Common myeloid progenitor, CD34-positive (primary cell): ENCODE measurements at regions of chr5 and their contacts with region 1.

Region 1: GRCh38 chr5:142881076-142881783 is 111.1 kb downstream of the ARHGAP26 start:
- DNase-seq: peak; percentile 63 to 93 (median 93)
- H3K4me3 ChIP-seq: no peak overlapping the region
- H3K27ac ChIP-seq: peak overlapping the region in 1 of 2 experiments; percentile 45
- H3K4me1 ChIP-seq: peaks cover 4 to 12% (median 8%) of the 10 kb centered on the region in 4 experiments
- H3K27me3 ChIP-seq: no peaks in the 10 kb centered on the region

Region 2: GRCh38 chr5:142655339-142656267 is 225.6 kb before region 1 on chr5:
- CTCF ChIA-PET with region 1: interaction called, 10 read pairs
- POLR2A ChIA-PET with region 1: no interaction called
- DNase-seq: peak; percentile 51 to 67 (median 66)
- H3K4me3 ChIP-seq: no peak overlapping the region
- H3K27ac ChIP-seq: no peak overlapping the region
- H3K4me1 ChIP-seq: no peaks in the 10 kb centered on the region
- H3K27me3 ChIP-seq: peaks cover 0 to 8% (median 2%) of the 10 kb centered on the region in 5 experiments

Region 3: DNA sequence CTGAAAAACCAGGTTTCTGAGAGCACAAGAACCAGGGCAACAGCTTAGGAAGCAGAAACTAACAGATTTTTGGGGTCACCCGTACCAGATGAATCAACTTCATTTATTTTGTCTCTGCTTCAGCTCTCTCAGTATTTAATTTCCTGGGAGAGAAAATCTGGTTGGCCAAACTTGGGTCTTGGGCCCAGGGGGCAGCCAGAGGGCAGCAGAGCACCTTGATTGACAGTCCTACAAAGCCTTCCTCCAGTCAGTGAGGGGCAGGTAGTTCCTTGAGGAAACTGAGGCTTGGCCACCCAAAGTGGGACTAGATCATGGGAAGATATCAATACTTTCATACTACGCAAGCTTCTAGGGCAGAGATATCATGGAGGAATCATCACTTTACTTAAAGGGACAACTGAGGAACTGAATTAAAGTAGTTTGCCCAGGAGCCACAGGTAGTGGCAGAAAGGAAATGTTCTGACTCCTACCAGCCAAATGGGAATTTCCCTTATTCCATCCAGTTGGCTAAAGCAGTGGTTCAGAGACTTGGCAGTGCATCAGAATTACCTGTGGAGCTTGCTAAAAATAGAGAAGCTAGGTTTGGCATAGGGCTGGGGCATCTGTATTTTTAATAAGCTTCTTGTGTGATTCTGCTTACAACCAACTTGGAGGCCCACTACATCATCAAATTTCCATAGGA is 132.5 kb before region 1 on chr5:
- CTCF ChIA-PET with region 1: interaction called, 115 read pairs
- POLR2A ChIA-PET with region 1: no interaction called
- DNase-seq: peak in 2 of 3 donors; percentile 20 to 23
- H3K4me3 ChIP-seq: no peak overlapping the region
- H3K27ac ChIP-seq: no peak overlapping the region
- H3K4me1 ChIP-seq: peaks cover 0 to 19% (median 8%) of the 10 kb centered on the region in 4 experiments
- H3K27me3 ChIP-seq: no peaks in the 10 kb centered on the region

Region 4: DNA sequence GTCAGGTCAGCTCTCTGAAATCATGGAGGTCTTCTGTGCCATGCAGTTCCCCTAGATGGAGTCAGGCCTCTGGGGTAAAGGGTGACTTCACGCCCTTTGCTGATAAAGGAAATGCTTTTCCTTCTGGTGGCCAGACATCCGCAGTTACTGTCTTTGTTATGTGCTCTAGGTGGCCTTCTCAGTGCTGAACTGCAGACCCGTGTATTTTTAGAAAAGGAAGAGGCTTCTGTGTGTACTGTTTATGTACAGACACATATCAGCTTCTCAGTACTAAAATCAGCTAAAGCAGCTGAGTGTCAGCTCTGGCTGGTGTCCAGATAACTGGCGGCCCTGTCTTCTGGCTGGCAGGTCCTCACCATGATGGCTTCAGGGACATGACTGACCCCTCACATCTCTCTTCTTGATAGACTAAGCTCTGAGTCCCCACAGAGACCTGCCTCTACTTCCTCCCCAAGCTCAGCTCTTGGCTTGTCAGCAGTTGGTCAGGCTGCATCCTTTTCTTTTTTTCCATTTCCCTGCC is 35.8 kb before region 1 on chr5:
- CTCF ChIA-PET with region 1: interaction called, 13 read pairs
- POLR2A ChIA-PET with region 1: no interaction called
- DNase-seq: peak in 2 of 3 donors; percentile 21 to 38
- H3K4me3 ChIP-seq: no peak overlapping the region
- H3K27ac ChIP-seq: peak overlapping the region in 1 of 2 experiments; percentile 50
- H3K4me1 ChIP-seq: peaks cover 12 to 34% (median 25%) of the 10 kb centered on the region in 4 experiments
- H3K27me3 ChIP-seq: no peaks in the 10 kb centered on the region

Region 5: DNA sequence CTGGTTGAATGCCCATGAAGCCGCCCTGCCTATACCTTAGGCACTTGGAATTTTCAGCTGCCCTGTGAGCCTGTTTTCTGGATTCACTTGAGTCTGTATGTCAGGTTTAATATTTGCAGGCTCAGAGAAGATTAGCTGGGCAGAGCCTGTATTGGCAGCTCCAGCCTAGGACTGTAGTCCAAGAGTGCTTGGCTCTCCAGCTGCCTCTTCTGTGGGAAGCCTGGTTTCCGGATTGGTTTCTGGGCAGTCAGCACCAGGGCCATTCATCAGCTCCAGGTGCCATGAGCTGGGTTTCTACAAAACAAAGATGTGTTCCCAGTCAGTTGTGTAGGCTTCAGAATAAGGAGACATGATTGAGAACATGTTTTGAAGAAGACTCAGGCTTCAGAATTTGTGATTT is 21.0 kb before region 1 on chr5:
- CTCF ChIA-PET with region 1: interaction called, 16 read pairs
- POLR2A ChIA-PET with region 1: no interaction called
- DNase-seq: peak in 2 of 3 donors; percentile 26 to 38
- H3K4me3 ChIP-seq: no peak overlapping the region
- H3K27ac ChIP-seq: no peak overlapping the region
- H3K4me1 ChIP-seq: peaks cover 0 to 18% (median 8%) of the 10 kb centered on the region in 4 experiments
- H3K27me3 ChIP-seq: no peaks in the 10 kb centered on the region

Region 6: GRCh38 chr5:143051244-143052058 is 170.2 kb after region 1 on chr5:
- CTCF ChIA-PET with region 1: no interaction called
- POLR2A ChIA-PET with region 1: no interaction called
- DNase-seq: peak in 2 of 3 donors; percentile 60
- H3K4me3 ChIP-seq: peak overlapping the region in 1 of 7 experiments; percentile 36
- H3K27ac ChIP-seq: no peak overlapping the region
- H3K4me1 ChIP-seq: peaks cover 0 to 40% (median 16%) of the 10 kb centered on the region in 4 experiments
- H3K27me3 ChIP-seq: no peaks in the 10 kb centered on the region